ENCODE measurements at regions of chr15 and their contacts with region 1.

Region 1: DNA sequence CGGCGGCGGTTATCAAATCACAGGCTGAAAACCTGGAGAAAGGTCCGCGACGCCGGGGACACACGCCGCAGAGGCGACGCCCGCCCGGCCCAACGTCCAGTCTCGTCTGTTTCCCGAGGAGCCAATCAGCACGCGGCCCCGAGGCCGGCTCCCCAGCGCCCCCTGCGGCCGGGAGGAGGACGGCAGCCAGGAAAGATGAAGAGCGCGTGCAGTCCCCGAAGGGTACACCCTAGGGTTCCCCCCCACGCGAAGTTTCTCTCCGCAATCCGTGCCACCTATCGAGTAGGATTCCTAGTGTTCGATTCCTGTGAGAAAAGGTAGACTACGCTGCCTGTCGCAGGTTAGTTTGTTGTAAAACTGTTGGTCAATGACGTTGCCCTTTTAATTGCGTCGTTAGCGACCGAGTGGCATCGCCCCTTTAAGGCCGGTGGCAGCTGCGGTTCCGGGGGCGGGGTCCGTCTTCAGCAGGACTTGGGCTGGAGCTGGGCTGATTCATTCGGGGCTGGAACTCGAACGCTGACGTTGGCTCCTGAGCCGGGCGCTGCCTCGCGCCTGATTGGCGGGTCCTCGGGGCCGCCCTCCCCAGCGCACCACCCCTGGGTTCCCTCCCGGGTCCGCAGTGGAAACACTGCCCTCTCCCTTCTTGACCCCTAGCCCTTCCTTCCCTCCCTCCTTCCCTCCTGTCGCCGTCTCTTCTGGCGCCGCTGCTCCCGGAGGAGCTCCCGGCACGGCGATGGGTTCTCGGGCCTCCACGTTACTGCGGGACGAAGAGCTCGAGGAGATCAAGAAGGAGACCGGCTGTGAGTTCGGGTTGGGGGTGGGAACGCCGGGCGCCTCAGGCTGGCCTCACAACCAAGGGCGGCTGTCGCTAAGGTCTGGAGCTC is at the starts of genes CHP1 and EXD1:
- DNase-seq: peak; percentile 95 to 99
- H3K4me3 ChIP-seq: peak within 1 kb of the TSS; percentile 72 to 96 (median 86)
- H3K27ac ChIP-seq: peak within 1 kb of the TSS; percentile 83; the same call in 1 of the 2 replicates
- H3K4me1 ChIP-seq: no peaks in the 10 kb centered on the region; a peak in 2 of 7 replicates
- H3K27me3 ChIP-seq: peaks cover 0 to 5% (median 4%) of the 10 kb centered on the region in 4 experiments; a peak in 2 of 7 replicates
- CTCF ChIP-seq: peak; percentile 78 to 86 (median 81)
- EP300 ChIP-seq: 0 out of 3 replicates have a peak, but pooled peaks of 1 of the 2 experiments have one; percentile 55
- POLR2A ChIP-seq: peak in 1 of 2 experiments; percentile 80; a peak in 2 of 3 replicates
- RAD21 ChIP-seq: peak in 1 of 2 experiments; percentile 53; a peak in 3 of 4 replicates
- total RNA-seq, gene CHP1: 83.3 and 89.0 TPM in 2 replicates
- total RNA-seq, gene EXD1: 0.54 TPM in 1 of 2 replicates, not detected in the other

Region 2: DNA sequence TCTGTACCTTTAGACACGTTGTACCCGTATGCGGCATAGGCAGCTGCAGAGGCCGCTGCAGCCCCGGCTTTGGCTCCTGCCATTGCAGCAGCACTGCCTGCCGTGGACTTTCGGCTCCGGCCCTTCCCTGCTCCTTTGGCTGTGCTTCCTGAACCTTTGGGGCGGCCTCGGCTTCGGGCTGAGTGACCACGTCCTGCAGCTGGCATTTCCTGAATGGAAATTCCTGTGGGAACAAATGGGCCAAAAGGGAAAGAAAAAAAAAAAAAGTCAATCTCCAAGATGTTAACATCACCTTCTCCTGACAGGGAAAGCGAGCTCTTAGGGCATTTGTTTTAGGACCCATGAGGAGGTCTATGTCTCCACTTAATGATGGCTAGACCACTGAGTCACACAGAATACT is 248.0 kb before region 1 on chr15:
- CTCF ChIA-PET with region 1: no interaction called
- POLR2A ChIA-PET with region 1: no interaction called
- DNase-seq: no peak
- H3K4me3 ChIP-seq: no peak overlapping the region
- H3K27ac ChIP-seq: no peak overlapping the region
- H3K4me1 ChIP-seq: no peaks in the 10 kb centered on the region
- H3K27me3 ChIP-seq: no peaks in the 10 kb centered on the region
- CTCF ChIP-seq: no peak
- EP300 ChIP-seq: no peak
- POLR2A ChIP-seq: no peak
- RAD21 ChIP-seq: no peak

Region 3: GRCh38 chr15:41066516-41066915 is 164.4 kb before region 1 on chr15:
- CTCF ChIA-PET with region 1: no interaction called
- POLR2A ChIA-PET with region 1: no interaction called
- DNase-seq: no peak
- H3K4me3 ChIP-seq: no peak overlapping the region
- H3K27ac ChIP-seq: no peak overlapping the region
- H3K4me1 ChIP-seq: no peaks in the 10 kb centered on the region
- H3K27me3 ChIP-seq: no peaks in the 10 kb centered on the region
- CTCF ChIP-seq: no peak
- EP300 ChIP-seq: no peak
- POLR2A ChIP-seq: no peak
- RAD21 ChIP-seq: no peak

Region 4: GRCh38 chr15:41116116-41116871 is 114.6 kb before region 1 on chr15 and contains the start of gene INO80:
- CTCF ChIA-PET with region 1: interaction called, 5 read pairs
- POLR2A ChIA-PET with region 1: interaction called, 12 read pairs
- DNase-seq: peak; percentile 90 to 97
- H3K4me3 ChIP-seq: peak within 1 kb of the TSS; percentile 68 to 96 (median 86)
- H3K27ac ChIP-seq: peak within 1 kb of the TSS; percentile 100
- H3K4me1 ChIP-seq: peaks cover 0 to 3% (median 0%) of the 10 kb centered on the region in 4 experiments; a peak in 2 of 7 replicates
- H3K27me3 ChIP-seq: no peaks in the 10 kb centered on the region
- CTCF ChIP-seq: no peak
- EP300 ChIP-seq: peak in 1 of 2 experiments; percentile 25; a peak in 1 of 3 replicates
- POLR2A ChIP-seq: peak; percentile 85 to 95
- RAD21 ChIP-seq: 0 out of 4 replicates have a peak, but pooled peaks of 1 of the 2 experiments have one; percentile 4
- total RNA-seq, gene INO80: 22.1 and 24.5 TPM in 2 replicates

Region 5: DNA sequence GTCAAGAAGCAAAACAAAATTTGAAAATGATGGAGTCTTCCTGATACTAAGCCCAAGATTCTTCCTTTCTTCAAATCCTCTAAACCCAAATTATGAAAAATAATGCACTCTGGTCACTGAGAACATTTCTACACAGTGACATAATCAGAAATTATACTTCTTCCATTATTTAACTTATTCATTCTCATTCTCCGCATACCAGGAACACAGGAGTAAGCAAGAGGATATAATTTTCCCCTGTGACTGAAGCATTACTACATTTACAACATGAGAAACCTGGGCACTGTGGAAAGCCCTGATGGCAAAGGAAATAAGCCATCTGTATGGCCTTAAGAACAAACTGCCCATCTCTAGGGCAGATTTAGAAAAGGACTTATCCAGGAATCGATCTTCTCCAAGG is 47.3 kb before region 1 on chr15:
- CTCF ChIA-PET with region 1: no interaction called
- POLR2A ChIA-PET with region 1: no interaction called
- DNase-seq: no peak
- H3K4me3 ChIP-seq: no peak overlapping the region
- H3K27ac ChIP-seq: no peak overlapping the region
- H3K4me1 ChIP-seq: peaks cover 0 to 3% (median 1%) of the 10 kb centered on the region in 4 experiments; a peak in 4 of 7 replicates
- H3K27me3 ChIP-seq: no peaks in the 10 kb centered on the region
- CTCF ChIP-seq: no peak
- EP300 ChIP-seq: no peak
- POLR2A ChIP-seq: no peak
- RAD21 ChIP-seq: no peak

Region 6: DNA sequence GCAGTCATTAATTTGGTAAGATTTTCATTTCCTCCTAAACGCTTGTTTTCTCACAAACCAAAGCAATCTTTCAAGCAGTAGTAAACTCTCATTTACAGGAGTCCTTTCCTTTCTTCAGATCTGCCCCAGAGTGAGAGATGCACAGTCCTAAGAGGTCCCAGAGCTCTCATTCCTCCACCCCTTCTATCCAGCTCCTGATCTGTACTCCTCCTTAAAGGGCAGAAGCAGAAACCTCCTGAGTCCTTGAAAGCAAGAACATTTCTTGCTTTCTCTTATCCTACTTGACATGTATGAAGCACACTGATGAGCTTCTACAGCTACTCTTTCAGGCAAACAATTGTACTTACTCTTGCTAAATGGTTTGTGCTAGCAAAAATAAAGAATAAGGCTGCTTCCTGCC is 12.0 kb before region 1 on chr15:
- CTCF ChIA-PET with region 1: interaction called, 23 read pairs
- POLR2A ChIA-PET with region 1: interaction called, 10 read pairs
- DNase-seq: no peak
- H3K4me3 ChIP-seq: no peak overlapping the region; a peak in 1 of 8 replicates
- H3K27ac ChIP-seq: no peak overlapping the region
- H3K4me1 ChIP-seq: peaks cover 0 to 9% (median 7%) of the 10 kb centered on the region in 4 experiments; a peak in 4 of 7 replicates
- H3K27me3 ChIP-seq: no peaks in the 10 kb centered on the region
- CTCF ChIP-seq: no peak
- EP300 ChIP-seq: no peak
- POLR2A ChIP-seq: no peak
- RAD21 ChIP-seq: no peak

Region 7: DNA sequence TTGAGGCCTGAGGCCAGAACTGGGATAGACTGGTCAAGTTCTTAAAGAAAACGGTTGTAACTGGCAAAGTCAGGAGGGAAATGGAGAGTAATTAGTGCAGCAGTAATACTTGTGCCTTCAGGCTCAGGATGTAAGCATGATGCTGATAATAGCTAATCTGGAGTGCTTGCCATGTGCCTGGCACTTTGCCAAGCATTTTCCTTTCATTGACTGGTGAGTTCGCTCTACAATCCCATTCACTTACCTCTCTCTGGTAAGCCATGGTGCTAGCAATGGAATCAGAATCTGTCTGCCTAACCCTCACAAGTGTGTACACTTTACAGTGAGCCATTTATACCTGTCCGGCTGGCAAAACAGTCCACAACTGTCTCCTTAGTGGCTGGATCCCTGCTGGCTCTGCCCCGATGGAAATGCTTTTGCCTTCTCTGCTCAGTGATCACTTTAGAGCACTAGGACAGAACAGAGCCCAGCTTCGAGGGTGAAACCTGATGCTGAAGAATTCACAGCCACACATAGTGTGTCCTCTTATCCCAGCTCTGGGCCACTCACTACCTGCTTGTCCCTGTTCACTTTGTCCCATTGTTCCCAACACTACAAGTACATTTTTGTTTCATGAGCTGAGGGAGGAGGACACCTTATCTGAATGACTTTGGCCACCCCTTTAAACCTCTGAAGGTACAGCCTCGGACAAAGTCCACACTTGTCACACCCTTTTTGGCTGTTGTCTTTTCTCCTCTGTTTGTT is 10.5 kb after region 1 on chr15:
- CTCF ChIA-PET with region 1: interaction called, 11 read pairs
- POLR2A ChIA-PET with region 1: interaction called, 8 read pairs
- DNase-seq: no peak
- H3K4me3 ChIP-seq: no peak overlapping the region
- H3K27ac ChIP-seq: no peak overlapping the region
- H3K4me1 ChIP-seq: no peaks in the 10 kb centered on the region
- H3K27me3 ChIP-seq: no peaks in the 10 kb centered on the region
- CTCF ChIP-seq: no peak
- EP300 ChIP-seq: no peak
- POLR2A ChIP-seq: no peak
- RAD21 ChIP-seq: no peak

Region 8: GRCh38 chr15:41283653-41284426 is 52.9 kb after region 1 on chr15:
- CTCF ChIA-PET with region 1: interaction called, 4 read pairs
- POLR2A ChIA-PET with region 1: interaction called, 13 read pairs
- DNase-seq: peak; percentile 96 to 97
- H3K4me3 ChIP-seq: peak overlapping the region; percentile 76 to 95 (median 90)
- H3K27ac ChIP-seq: peak overlapping the region; percentile 92
- H3K4me1 ChIP-seq: peaks cover 0 to 5% (median 2%) of the 10 kb centered on the region in 4 experiments; a peak in 3 of 7 replicates
- H3K27me3 ChIP-seq: no peaks in the 10 kb centered on the region
- CTCF ChIP-seq: no peak
- EP300 ChIP-seq: no peak
- POLR2A ChIP-seq: peak; percentile 95 to 98
- RAD21 ChIP-seq: no peak

Measured in H1 (cell line).